ENCODE measurements at regions of chr5 and their contacts with region 1.

Region 1: GRCh38 chr5:39691993-39692392 is 267.2 kb upstream of the DAB2 start:
- DNase-seq: peak; percentile 9
- H3K4me3 Mint-ChIP-seq: no peak overlapping the region
- H3K27ac Mint-ChIP-seq: no peak overlapping the region
- H3K4me1 Mint-ChIP-seq: no peaks in the 10 kb centered on the region
- H3K27me3 Mint-ChIP-seq: no peaks in the 10 kb centered on the region
- CTCF ChIP-seq: peak; percentile 36

Region 2: DNA sequence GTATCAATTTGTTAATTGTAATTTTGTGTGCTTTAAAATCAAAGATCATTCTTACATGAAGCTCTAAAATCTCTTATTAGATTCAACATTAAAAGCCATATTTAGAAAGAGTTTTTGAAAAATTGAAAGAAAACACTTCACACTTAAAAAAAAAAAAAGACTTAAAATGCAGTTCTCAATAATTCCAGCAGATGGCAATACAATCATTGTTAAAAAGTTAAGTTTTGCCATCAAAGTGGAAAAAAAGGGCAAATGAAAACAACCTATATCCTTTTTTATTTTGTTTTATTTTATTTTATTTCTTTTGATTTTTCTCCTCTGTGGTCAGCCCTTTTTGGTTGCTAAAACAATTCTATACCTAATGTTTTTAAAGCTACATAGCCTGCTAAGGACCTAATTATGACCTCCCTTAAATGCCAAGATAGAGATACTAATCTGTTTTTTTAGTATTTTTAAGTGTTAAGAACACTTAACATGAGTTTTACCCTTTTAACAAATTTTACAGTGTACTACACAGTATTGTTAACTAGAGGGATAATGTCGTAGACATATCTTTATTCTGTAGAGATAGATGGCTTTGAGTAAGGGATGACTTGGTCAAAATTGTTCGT is 113.0 kb before region 1 on chr5:
- CTCF ChIA-PET with region 1: no interaction called
- intact Hi-C with region 1: loop called (anchors 2 kb)
- DNase-seq: no peak
- H3K4me3 Mint-ChIP-seq: no peak overlapping the region
- H3K27ac Mint-ChIP-seq: no peak overlapping the region
- H3K4me1 Mint-ChIP-seq: peaks cover 18% of the 10 kb centered on the region
- H3K27me3 Mint-ChIP-seq: no peaks in the 10 kb centered on the region
- CTCF ChIP-seq: peak; percentile 42

Region 3: DNA sequence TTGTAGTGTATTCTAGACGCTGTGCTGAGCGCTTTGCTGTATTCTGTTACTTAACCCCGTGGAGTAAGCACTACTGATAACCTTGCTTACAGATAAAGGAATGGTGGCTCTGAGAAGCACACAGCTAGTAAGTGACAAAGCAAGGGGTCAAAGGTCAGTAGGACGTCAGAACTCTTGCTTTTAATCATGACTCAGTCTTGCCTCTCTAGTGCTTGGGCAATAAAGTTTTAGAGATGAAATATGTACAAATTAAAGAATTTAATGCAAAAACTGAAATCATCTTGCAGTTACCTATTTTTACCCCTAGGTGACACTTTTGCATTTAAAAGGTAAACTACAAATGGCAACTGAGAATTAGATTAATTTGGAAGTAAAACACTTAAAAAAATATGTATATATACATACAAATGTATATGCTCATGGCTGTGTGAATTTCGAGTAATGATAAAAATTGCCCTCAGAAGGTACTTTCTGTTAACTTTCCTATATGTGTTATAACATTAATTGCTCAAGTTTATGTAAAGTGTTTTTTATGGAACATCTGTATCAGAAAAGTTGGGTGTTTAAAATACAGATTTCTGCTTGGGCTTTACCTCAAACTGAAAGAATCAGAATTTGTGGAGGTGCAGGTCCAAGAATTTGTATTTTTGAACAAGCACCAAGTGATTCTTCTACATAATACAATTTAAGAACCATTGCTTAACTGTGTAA is 92.1 kb before region 1 on chr5:
- CTCF ChIA-PET with region 1: no interaction called
- intact Hi-C with region 1: loop called (anchors 1 kb)
- DNase-seq: no peak
- H3K4me3 Mint-ChIP-seq: no peak overlapping the region
- H3K27ac Mint-ChIP-seq: no peak overlapping the region
- H3K4me1 Mint-ChIP-seq: no peaks in the 10 kb centered on the region
- H3K27me3 Mint-ChIP-seq: no peaks in the 10 kb centered on the region
- CTCF ChIP-seq: peak; percentile 33

Region 4: GRCh38 chr5:39648532-39649213 is 43.3 kb before region 1 on chr5:
- CTCF ChIA-PET with region 1: interaction called, 5 read pairs
- intact Hi-C with region 1: loop called (anchors 1 kb)
- DNase-seq: peak; percentile 65
- H3K4me3 Mint-ChIP-seq: no peak overlapping the region
- H3K27ac Mint-ChIP-seq: peak overlapping the region; percentile 70
- H3K4me1 Mint-ChIP-seq: peaks cover 31% of the 10 kb centered on the region
- H3K27me3 Mint-ChIP-seq: no peaks in the 10 kb centered on the region
- CTCF ChIP-seq: no peak

Measured in Calu3 (cell line).